Breast epithelium (tissue), 4 donors: ENCODE measurements at regions of chr7 and their contacts with region 1.

Region 1: GRCh38 chr7:48502021-48502420 is 330.8 kb downstream of the ABCA13 start:
- DNase-seq: no peak
- H3K4me3 ChIP-seq: no peak overlapping the region
- H3K27ac ChIP-seq: no peak overlapping the region
- H3K4me1 ChIP-seq: no peaks in the 10 kb centered on the region
- H3K27me3 ChIP-seq: no peaks in the 10 kb centered on the region
- CTCF ChIP-seq: no peak
- POLR2A ChIP-seq: no peak

Region 2: GRCh38 chr7:46682836-46683624 is 1819.0 kb before region 1 on chr7:
- intact Hi-C with region 1: no loop called
- DNase-seq: no peak
- H3K4me3 ChIP-seq: no peak overlapping the region
- H3K27ac ChIP-seq: no peak overlapping the region
- H3K4me1 ChIP-seq: no peaks in the 10 kb centered on the region
- H3K27me3 ChIP-seq: no peaks in the 10 kb centered on the region
- CTCF ChIP-seq: no peak
- POLR2A ChIP-seq: no peak

Region 3: GRCh38 chr7:47497367-47498096 is 1004.5 kb before region 1 on chr7:
- intact Hi-C with region 1: no loop called
- DNase-seq: no peak
- H3K4me3 ChIP-seq: no peak overlapping the region
- H3K27ac ChIP-seq: peak overlapping the region in 1 of 2 donors; percentile 30
- H3K4me1 ChIP-seq: no peaks in the 10 kb centered on the region
- H3K27me3 ChIP-seq: no peaks in the 10 kb centered on the region
- CTCF ChIP-seq: no peak
- POLR2A ChIP-seq: no peak

Region 4: DNA sequence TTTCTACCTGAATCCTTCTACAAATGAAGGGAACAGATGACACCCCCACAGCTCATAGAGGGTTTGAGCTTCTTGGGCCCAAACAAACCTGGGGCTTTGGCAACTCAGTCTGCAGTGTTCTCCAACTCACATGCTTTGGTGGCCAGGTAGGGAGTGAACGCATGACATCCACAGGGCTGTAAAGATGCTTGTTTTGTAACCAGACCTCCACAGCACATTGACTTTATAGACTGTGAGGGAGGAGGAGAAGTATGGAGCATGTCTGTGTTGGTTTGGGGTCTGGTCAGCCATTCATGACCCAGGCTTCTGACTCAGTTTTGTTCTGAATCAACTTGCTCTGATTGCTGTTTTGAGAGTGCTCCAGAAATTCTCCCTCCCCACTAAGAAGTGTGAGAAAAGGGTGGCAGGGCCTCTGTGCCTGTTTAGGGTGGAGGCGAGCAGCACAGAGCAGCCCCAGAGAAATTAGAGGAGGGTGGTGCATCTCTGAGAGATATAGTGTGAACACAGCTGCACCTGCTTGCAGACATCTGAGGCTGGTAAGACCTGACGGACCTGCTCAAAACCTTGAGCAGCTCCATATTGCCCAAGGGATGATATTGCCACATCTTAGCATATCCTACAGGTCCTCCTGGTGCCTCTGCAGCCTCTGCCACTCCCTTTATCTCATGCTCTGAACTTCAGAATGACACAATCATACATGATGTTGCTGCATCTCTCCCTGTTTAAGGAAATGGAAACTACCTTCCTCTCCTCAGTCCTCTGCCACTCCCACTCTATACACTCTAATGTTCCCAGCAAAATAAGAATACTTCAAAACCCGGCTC is 43.1 kb before region 1 on chr7:
- intact Hi-C with region 1: no loop called
- DNase-seq: no peak
- H3K4me3 ChIP-seq: no peak overlapping the region
- H3K27ac ChIP-seq: no peak overlapping the region
- H3K4me1 ChIP-seq: no peaks in the 10 kb centered on the region
- H3K27me3 ChIP-seq: no peaks in the 10 kb centered on the region
- CTCF ChIP-seq: no peak
- POLR2A ChIP-seq: no peak

Region 5: DNA sequence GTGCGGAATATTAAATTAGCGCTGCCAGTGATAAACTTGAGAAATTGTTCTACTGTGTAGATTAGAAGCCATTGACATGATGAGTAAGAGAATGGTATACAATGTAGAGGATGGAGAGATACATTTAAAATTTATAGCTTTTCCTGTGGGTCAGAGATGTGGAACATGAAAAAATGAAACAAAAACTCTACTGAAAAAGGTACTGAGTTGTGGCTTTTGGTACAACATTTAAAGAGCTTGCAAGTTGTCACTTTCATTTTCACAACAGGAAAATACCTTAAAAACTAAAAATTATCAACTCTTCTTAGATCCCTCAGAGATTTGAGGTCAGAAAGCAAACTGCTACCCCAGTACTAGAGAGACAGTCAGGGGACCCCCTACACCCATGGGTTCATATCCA is 73.5 kb after region 1 on chr7:
- intact Hi-C with region 1: no loop called
- DNase-seq: no peak
- H3K4me3 ChIP-seq: no peak overlapping the region
- H3K27ac ChIP-seq: no peak overlapping the region
- H3K4me1 ChIP-seq: no peaks in the 10 kb centered on the region
- H3K27me3 ChIP-seq: no peaks in the 10 kb centered on the region
- CTCF ChIP-seq: no peak
- POLR2A ChIP-seq: no peak

Region 6: GRCh38 chr7:49273897-49274296 is 771.9 kb after region 1 on chr7:
- intact Hi-C with region 1: loop called (anchors 5 kb)
- DNase-seq: no peak
- H3K4me3 ChIP-seq: no peak overlapping the region
- H3K27ac ChIP-seq: no peak overlapping the region
- H3K4me1 ChIP-seq: no peaks in the 10 kb centered on the region
- H3K27me3 ChIP-seq: no peaks in the 10 kb centered on the region
- CTCF ChIP-seq: no peak
- POLR2A ChIP-seq: no peak